IMR-90 (cell line): ENCODE measurements at regions of chr3 and their contacts with region 1.

Region 1: GRCh38 chr3:147200545-147200944 is 205.8 kb downstream of the ZIC4 start:
- DNase-seq: peak; percentile 84
- ATAC-seq: peak; percentile 99
- H3K4me3 ChIP-seq: no peak overlapping the region
- H3K27ac ChIP-seq: no peak overlapping the region
- H3K4me1 ChIP-seq: no peaks in the 10 kb centered on the region
- H3K27me3 ChIP-seq: no peaks in the 10 kb centered on the region
- CTCF ChIP-seq: no peak
- POLR2A ChIP-seq: no peak
- RAD21 ChIP-seq: no peak

Region 2: DNA sequence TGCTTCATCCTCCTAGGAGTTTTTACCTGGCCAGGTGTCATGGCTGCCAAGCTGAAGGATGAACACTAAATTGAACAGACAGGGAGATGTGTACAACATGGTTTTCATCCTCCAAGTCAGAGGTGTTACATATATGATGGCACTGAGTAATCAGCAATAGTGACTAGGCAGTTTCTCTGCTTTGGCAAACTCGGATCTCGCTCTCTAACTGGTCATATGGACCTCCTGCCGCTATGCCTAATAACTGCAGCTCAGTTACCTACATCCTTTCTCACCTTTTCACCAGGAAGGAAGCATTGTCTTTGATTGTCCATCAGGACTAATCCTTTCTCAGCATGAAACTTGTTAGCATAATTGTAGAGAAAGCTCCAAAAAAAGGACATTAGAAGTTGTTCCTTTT is 419.5 kb before region 1 on chr3:
- CTCF ChIA-PET with region 1: no interaction called
- POLR2A ChIA-PET with region 1: no interaction called
- dilution Hi-C with region 1: no loop called
- in situ Hi-C with region 1: no loop called
- intact Hi-C with region 1: no loop called
- DNase-seq: no peak
- ATAC-seq: no peak
- H3K4me3 ChIP-seq: no peak overlapping the region
- H3K27ac ChIP-seq: no peak overlapping the region
- H3K4me1 ChIP-seq: no peaks in the 10 kb centered on the region
- H3K27me3 ChIP-seq: no peaks in the 10 kb centered on the region
- CTCF ChIP-seq: no peak
- POLR2A ChIP-seq: no peak
- RAD21 ChIP-seq: no peak

Region 3: GRCh38 chr3:147119989-147120388 is 80.6 kb before region 1 on chr3:
- CTCF ChIA-PET with region 1: no interaction called
- POLR2A ChIA-PET with region 1: no interaction called
- dilution Hi-C with region 1: no loop called
- in situ Hi-C with region 1: no loop called
- intact Hi-C with region 1: loop called (anchors 2 kb)
- DNase-seq: peak; percentile 45
- ATAC-seq: peak; percentile 66
- H3K4me3 ChIP-seq: no peak overlapping the region
- H3K27ac ChIP-seq: no peak overlapping the region
- H3K4me1 ChIP-seq: no peaks in the 10 kb centered on the region
- H3K27me3 ChIP-seq: no peaks in the 10 kb centered on the region
- CTCF ChIP-seq: peak; percentile 61
- POLR2A ChIP-seq: no peak
- RAD21 ChIP-seq: peak; percentile 61

Region 4: GRCh38 chr3:147298511-147298982 is 98.0 kb after region 1 on chr3:
- CTCF ChIA-PET with region 1: no interaction called
- POLR2A ChIA-PET with region 1: no interaction called
- dilution Hi-C with region 1: no loop called
- in situ Hi-C with region 1: no loop called
- intact Hi-C with region 1: loop called (anchors 5 kb)
- DNase-seq: peak; percentile 100
- ATAC-seq: peak; percentile 97
- H3K4me3 ChIP-seq: no peak overlapping the region
- H3K27ac ChIP-seq: no peak overlapping the region; the same call in 1 of the 2 replicates
- H3K4me1 ChIP-seq: peaks cover 4% of the 10 kb centered on the region
- H3K27me3 ChIP-seq: no peaks in the 10 kb centered on the region
- CTCF ChIP-seq: no peak
- POLR2A ChIP-seq: 0 out of 2 replicates have a peak, but pooled peaks have one; percentile 40
- RAD21 ChIP-seq: no peak